Left ventricle myocardium inferior (tissue), 1 donor: ENCODE measurements at regions of chr4 and their contacts with region 1.

Region 1: GRCh38 chr4:140069066-140069465 is 84.9 kb downstream of the MAML3 start:
- DNase-seq: peak; percentile 28
- H3K4me3 ChIP-seq: no peak overlapping the region
- H3K27ac ChIP-seq: no peak overlapping the region
- H3K4me1 ChIP-seq: peaks cover 6% of the 10 kb centered on the region
- H3K27me3 ChIP-seq: no peaks in the 10 kb centered on the region
- CTCF ChIP-seq: no peak

Region 2: DNA sequence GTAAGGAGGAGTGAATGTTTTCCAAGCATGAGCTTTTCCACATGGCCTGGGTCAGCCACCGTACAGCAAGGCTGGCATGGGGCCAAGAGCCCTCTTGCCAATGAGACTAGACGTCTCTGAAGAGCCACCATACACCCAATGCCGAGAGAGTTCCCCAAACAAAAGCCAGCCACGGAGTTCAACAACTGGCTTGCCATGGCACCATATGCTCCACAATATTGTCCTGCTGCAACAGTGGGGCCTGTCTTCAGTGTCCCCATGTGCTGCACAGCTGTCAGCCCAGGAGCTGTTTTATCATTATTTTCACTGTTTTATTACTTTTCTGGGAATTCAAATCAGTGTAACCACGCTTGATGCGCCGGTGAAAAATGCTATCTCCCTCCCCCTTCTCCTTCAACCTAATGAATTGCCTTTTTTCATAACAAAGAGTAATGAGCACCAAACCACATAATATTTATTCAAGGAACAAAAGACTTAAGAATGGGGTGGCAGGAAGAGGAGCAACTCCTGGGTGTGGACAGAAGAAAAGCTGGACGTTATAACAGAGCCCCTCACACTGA is 66.5 kb after region 1 on chr4:
- intact Hi-C with region 1: loop called (anchors 10 kb)
- DNase-seq: peak; percentile 55
- H3K4me3 ChIP-seq: no peak overlapping the region
- H3K27ac ChIP-seq: peak overlapping the region; percentile 18
- H3K4me1 ChIP-seq: peaks cover 16% of the 10 kb centered on the region
- H3K27me3 ChIP-seq: no peaks in the 10 kb centered on the region
- CTCF ChIP-seq: no peak

Region 3: GRCh38 chr4:140408974-140409373 is 339.9 kb after region 1 on chr4:
- intact Hi-C with region 1: no loop called
- DNase-seq: no peak
- H3K4me3 ChIP-seq: no peak overlapping the region
- H3K27ac ChIP-seq: no peak overlapping the region
- H3K4me1 ChIP-seq: peaks cover 12% of the 10 kb centered on the region
- H3K27me3 ChIP-seq: no peaks in the 10 kb centered on the region
- CTCF ChIP-seq: no peak

Region 4: DNA sequence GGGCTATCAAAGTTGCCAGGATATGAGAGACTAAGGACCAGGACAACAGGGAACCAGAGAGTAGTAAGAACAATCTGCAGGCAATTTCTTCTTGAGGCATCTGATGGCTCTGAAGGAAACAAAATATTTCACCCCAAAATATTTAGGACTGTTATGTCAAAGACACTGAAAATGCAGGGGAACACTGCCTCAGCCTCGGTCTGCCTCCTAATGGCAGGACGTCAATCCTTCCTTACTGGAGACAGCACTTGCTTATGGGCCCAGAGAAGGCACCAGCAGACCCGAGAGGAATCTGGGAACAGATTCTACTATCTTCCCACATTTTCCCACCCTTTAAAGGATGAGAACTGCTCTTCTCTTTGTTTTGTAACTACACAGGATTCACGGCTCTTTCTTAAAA is 1040.9 kb after region 1 on chr4:
- intact Hi-C with region 1: no loop called
- DNase-seq: no peak
- H3K4me3 ChIP-seq: no peak overlapping the region
- H3K27ac ChIP-seq: peak overlapping the region; percentile 8
- H3K4me1 ChIP-seq: peaks cover 44% of the 10 kb centered on the region
- H3K27me3 ChIP-seq: no peaks in the 10 kb centered on the region
- CTCF ChIP-seq: no peak